WTC11 (cell line): ENCODE measurements at regions of chr9 and their contacts with region 1.

Region 1: GRCh38 chr9:115591584-115591984 is 473.6 kb upstream of the TNC start:
- DNase-seq: peak; percentile 47
- ATAC-seq: peak; percentile 88
- H3K4me3 Mint-ChIP-seq: peak overlapping the region; percentile 54
- H3K27ac Mint-ChIP-seq: peak overlapping the region; percentile 94; the same call in 1 of the 2 replicates
- H3K4me1 Mint-ChIP-seq: peaks cover 25% of the 10 kb centered on the region
- H3K27me3 Mint-ChIP-seq: peaks cover 8% of the 10 kb centered on the region
- CTCF ChIP-seq: peak; percentile 72

Region 2: DNA sequence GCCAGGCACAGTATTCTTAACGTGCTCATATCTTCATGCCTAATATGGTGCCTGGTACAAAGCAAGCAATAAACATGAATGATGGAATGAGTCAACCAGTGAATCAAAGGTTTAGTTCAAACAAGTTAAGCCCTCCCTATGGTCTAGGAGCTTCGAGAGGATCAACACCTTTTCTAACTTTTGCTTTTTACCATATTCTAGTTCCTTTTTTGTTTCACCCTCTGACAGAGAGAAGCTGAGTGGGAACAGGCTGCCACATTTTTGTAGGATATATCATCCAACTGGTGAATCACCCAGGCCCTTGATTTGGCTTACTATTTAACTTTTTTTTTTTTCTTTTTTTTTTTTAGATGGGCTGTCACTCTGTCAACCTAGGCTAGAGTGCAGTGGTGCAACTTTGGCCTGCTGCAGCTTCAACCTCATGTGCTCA is 434.3 kb before region 1 on chr9:
- CTCF ChIA-PET with region 1: no interaction called
- POLR2A ChIA-PET with region 1: no interaction called
- DNase-seq: no peak
- ATAC-seq: no peak
- H3K4me3 Mint-ChIP-seq: no peak overlapping the region
- H3K27ac Mint-ChIP-seq: no peak overlapping the region
- H3K4me1 Mint-ChIP-seq: no peaks in the 10 kb centered on the region
- H3K27me3 Mint-ChIP-seq: peaks cover 5% of the 10 kb centered on the region; the same call in 1 of the 2 replicates
- CTCF ChIP-seq: no peak

Region 3: DNA sequence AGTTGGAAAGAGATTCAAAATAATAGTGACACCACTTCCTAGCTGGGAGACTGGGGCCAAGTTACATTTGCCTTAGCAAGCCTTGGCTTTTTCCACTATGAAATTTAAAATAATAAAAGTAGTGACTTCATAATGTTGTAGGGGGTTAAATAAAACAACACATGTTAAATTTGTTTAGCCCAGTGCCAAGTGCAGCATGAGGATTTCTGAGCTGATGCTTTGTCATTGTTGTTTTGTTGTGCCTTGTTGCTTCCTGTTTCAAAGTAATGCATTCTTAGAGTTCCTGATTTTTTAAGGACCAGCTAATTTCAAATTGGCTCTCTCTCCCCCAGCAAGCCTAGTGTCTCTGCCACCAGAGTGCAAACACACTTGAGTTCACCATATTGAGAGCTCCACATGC is 291.3 kb after region 1 on chr9:
- CTCF ChIA-PET with region 1: interaction called, 12 read pairs
- POLR2A ChIA-PET with region 1: no interaction called
- DNase-seq: no peak
- ATAC-seq: no peak
- H3K4me3 Mint-ChIP-seq: no peak overlapping the region
- H3K27ac Mint-ChIP-seq: no peak overlapping the region
- H3K4me1 Mint-ChIP-seq: peaks cover 25% of the 10 kb centered on the region
- H3K27me3 Mint-ChIP-seq: no peaks in the 10 kb centered on the region
- CTCF ChIP-seq: no peak